AG04449 (cell line): ENCODE measurements at regions of chr16 and their contacts with region 1.

Region 1: DNA sequence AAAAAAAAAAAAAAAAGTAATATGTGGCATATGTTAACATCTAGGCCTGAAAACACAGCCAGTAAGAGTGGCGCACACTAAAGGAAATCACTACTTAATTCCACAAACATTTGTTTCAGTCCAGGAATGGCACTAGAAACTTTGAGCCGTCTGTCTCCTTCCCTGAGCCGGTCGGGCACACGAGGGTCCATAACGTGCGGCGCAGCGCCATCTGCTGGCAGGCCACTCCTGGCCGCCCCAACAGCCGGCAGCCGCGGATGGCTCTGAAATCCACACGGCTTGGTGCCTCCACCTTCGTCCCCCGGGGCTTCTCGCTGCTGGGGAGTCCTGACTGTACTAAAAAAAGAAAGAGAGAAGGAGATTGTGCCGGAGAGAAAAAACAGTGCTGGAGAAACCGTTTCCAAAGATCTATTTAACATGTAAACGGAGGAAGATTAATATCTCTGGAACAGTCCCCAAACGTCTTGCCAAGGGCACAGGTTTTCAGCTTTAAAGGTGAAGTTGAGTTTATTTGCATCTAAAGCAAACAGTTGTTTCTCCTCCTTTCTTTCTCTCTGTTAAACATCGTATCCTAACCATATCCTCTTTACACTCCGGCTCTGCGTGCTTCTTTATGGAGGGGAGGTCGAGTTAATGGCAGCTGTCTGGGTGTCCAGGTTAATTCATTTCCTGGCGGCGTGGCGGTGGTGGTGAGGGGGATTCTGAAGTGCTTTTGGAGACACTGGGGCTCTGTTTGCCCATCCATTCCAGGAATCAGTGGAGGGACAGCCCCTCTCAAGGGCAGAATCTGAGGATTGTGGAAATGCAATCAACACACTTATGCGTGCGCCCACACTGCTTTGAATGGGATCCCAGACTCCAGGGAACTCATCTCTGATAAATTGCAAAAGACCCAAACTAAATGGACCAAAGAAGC is 611.3 kb upstream of the SALL1 start:
- DNase-seq: peak; percentile 7
- H3K4me3 ChIP-seq: no peak overlapping the region
- CTCF ChIP-seq: peak; percentile 98

Region 2: GRCh38 chr16:51146256-51146924 is 615.9 kb before region 1 on chr16:
- CTCF ChIA-PET with region 1: interaction called, 57 read pairs
- POLR2A ChIA-PET with region 1: no interaction called
- DNase-seq: no peak
- H3K4me3 ChIP-seq: peak overlapping the region; percentile 39
- CTCF ChIP-seq: peak; percentile 40

Region 3: DNA sequence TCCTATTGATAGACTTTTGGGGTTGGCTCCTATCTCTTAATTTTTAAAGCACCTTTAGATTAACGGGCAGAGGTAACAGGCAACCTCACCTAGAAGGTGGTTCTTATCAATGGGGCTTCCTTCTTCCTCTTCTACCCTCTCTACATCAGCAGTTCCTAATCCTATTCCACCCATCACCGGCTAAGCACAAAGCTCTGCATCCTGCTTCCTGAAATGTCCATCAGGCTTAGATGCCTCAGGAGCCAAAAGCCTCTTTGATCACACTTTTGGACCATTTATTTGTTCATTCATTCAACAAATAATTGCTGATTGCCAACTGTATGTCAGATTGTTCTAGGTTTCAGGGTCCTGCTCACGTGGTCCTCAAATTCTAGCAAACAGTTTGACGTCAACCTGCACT is 198.6 kb after region 1 on chr16:
- CTCF ChIA-PET with region 1: no interaction called
- POLR2A ChIA-PET with region 1: no interaction called
- DNase-seq: no peak
- H3K4me3 ChIP-seq: no peak overlapping the region
- CTCF ChIP-seq: no peak